ENCODE measurements at regions of chr2 and their contacts with region 1.

Region 1: DNA sequence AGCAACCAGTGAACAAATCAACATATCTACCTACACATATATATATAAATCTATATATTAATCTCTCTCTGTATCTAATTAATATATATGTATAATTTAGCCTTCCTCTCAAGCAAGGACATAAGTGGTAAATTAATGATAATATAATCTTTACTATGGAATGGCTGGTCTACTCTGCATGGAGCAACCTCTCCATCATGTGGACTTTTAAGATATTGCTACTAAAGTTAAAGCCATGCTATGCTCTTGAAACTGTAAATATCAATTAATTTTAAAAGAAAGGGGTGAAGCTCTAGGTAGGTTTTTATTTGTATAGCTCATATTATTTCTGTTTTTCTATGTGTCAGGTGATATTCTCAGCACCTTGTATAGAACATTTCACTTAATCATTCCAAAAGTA is 147.0 kb downstream of the PPP1R1C start:
- DNase-seq: peak; percentile 53
- ATAC-seq: peak; percentile 62; the same call in 1 of the 2 replicates
- H3K4me3 ChIP-seq: no peak overlapping the region
- H3K27ac ChIP-seq: no peak overlapping the region
- H3K4me1 ChIP-seq: peaks cover 10% of the 10 kb centered on the region
- H3K27me3 ChIP-seq: no peaks in the 10 kb centered on the region
- CTCF ChIP-seq: peak; percentile 63
- POLR2A ChIP-seq: no peak
- RAD21 ChIP-seq: peak; percentile 75

Region 2: DNA sequence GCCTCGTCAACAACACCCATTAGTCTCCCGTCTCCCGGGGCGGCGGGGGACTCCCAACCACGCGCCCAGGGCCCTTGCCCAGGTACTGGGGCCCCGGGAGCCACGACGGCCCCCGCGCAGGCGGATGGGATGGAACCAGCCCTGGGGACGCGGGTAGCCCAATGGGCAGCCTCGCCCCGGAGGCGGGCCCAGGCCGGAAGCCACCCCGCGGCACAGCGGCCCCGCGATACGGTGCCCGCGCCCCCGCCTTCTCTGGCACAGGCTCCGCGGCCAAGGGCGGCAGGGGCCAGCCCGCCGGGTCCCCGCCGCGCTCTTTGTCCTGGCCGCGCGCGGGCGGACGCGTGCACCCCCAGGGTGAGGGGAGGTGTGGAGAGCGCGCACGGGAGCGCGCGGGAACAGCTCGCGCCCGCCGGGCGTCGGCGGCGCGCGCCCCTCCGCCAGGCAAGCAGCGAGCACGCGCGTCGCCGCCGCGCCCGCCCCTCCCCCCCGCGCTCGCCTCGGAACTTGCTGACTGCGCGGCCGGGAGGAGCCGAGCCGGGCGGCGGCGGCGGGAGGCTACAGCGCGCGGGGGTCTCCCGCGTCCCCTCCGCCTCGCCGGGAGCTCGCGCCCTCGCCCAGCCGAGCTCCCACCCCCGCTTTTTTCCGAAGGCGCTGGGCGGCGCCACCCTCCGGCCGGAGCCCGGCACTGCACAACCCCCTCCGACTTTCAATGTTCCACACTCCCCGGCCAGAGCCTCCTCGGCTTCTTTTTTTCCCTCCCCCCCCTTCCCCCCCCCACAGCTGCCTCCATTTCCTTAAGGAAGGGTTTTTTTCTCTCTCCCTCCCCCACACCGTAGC is 1152.3 kb before region 1 on chr2 and contains the start of gene UBE2E3:
- CTCF ChIA-PET with region 1: no interaction called
- POLR2A ChIA-PET with region 1: no interaction called
- dilution Hi-C with region 1: no loop called
- in situ Hi-C with region 1: no loop called
- intact Hi-C with region 1: loop called (anchors 5 kb)
- DNase-seq: peak; percentile 72
- ATAC-seq: peak; percentile 82
- H3K4me3 ChIP-seq: peak within 1 kb of the TSS; percentile 96
- H3K27ac ChIP-seq: peak within 1 kb of the TSS; percentile 75
- H3K4me1 ChIP-seq: 0 out of 2 replicates have a peak, but pooled peaks cover 7% of the 10 kb centered on the region
- H3K27me3 ChIP-seq: no peaks in the 10 kb centered on the region
- CTCF ChIP-seq: peak; percentile 77
- POLR2A ChIP-seq: peak; percentile 44
- RAD21 ChIP-seq: peak; percentile 67
- total RNA-seq, gene UBE2E3: 92.8 and 106 TPM in 2 replicates

Region 3: DNA sequence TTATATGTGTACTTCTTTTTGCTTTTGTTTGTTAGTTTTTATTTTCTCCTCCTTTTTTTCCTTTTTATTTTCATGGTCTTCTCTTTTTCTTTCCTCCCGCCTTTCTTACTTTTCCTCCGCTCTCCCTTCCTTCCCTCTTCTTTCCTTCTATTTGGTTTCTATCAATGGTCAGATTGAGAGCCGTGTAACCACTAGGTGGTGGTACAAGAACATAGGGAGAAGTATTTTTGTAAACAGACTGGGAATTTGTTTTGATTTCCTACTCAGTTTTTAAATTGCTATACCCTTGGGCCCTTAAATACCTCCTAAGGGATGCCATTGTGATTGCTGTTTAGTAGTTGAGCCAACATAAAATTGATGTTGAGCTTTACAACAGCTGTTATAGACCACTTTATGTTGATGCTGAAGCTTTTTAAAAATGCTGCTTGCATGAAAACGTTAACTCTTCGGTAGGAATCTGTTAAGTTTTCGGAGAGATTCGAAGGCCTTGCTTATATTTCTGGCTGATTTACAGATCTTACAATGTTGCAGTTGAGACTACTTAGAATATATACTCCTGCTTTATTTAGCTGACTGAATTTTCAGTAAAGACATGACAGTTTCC is 1028.0 kb before region 1 on chr2:
- CTCF ChIA-PET with region 1: no interaction called
- POLR2A ChIA-PET with region 1: no interaction called
- dilution Hi-C with region 1: no loop called
- in situ Hi-C with region 1: no loop called
- intact Hi-C with region 1: loop called (anchors 5 kb)
- DNase-seq: peak; percentile 76
- ATAC-seq: peak; percentile 50
- H3K4me3 ChIP-seq: no peak overlapping the region
- H3K27ac ChIP-seq: no peak overlapping the region
- H3K4me1 ChIP-seq: peaks cover 5% of the 10 kb centered on the region
- H3K27me3 ChIP-seq: no peaks in the 10 kb centered on the region
- CTCF ChIP-seq: peak; percentile 90
- POLR2A ChIP-seq: no peak
- RAD21 ChIP-seq: peak; percentile 86

Region 4: DNA sequence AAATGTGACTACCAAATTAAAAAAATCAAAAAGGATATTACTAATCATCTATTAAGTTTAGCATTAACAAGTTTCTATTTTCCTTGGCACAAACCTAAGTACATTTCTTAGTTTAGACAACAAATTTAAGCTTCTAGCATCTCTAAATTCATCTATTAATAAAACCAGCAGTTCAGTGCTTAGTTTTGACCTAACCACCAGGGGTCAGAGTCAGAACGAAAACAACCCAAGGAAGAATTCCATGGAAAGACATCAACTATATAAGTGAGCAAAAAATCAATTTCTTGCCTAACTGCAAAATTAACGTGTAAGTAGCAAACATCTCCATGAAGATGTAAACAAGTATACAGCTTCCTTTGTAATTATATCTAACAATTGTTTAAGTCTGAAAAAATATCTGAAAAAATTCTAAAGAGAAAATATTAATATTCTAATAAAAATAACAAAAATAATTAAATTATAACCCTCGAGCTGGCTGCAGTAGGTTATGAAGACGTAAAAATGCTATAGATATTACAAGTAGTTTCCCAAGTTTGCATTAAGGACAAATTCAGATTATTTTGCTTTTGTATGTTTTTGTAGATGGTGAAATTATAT is 559.4 kb before region 1 on chr2:
- CTCF ChIA-PET with region 1: interaction called, 3 read pairs
- POLR2A ChIA-PET with region 1: no interaction called
- dilution Hi-C with region 1: no loop called
- in situ Hi-C with region 1: loop called (anchors 25 kb)
- intact Hi-C with region 1: loop called (anchors 1 kb)
- DNase-seq: peak; percentile 50
- ATAC-seq: peak; percentile 54; the same call in 1 of the 2 replicates
- H3K4me3 ChIP-seq: no peak overlapping the region
- H3K27ac ChIP-seq: no peak overlapping the region
- H3K4me1 ChIP-seq: no peaks in the 10 kb centered on the region
- H3K27me3 ChIP-seq: peaks cover 9% of the 10 kb centered on the region
- CTCF ChIP-seq: peak; percentile 55
- POLR2A ChIP-seq: no peak
- RAD21 ChIP-seq: peak; percentile 47

Region 5: DNA sequence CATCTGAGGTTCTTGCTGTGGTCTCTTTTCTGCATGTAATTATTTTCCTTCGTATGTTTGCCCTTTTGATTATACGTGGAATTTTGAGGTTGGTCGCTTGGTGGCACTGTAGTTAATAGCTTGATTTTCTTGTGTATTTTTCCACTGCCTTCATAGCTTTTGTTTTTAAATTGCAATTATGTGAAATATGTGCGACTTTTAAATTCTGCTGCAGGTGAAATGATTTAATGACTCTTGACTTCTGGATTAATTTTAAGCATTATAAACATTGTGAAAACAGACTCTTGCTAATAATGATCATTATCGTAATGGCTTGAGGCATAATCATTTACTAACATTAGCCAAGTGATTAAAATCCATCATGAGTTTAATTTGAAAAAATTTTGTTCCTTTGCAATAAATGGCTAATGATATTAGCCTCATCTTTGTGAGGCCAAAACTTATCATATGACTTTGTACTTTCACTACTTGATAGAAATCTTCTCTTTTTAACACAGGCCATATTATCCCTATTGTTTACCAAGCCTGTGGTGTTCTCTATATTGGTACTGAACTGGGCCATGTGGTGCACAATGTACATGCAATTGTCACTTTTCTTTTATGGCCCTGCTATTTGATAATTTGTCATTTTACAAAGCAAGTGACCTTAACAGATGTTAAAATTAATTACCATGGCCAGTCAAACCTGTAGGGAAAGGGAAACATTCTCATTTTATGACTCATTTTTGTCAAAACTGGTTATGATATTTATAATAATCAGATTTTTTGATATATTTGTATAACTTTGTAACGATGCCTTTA is 389.5 kb before region 1 on chr2:
- CTCF ChIA-PET with region 1: interaction called, 3 read pairs
- POLR2A ChIA-PET with region 1: no interaction called
- dilution Hi-C with region 1: no loop called
- in situ Hi-C with region 1: no loop called
- intact Hi-C with region 1: loop called (anchors 1 kb)
- DNase-seq: peak; percentile 73
- ATAC-seq: peak; percentile 77
- H3K4me3 ChIP-seq: no peak overlapping the region
- H3K27ac ChIP-seq: no peak overlapping the region
- H3K4me1 ChIP-seq: no peaks in the 10 kb centered on the region; the same call in 1 of the 2 replicates
- H3K27me3 ChIP-seq: no peaks in the 10 kb centered on the region
- CTCF ChIP-seq: peak; percentile 77
- POLR2A ChIP-seq: no peak
- RAD21 ChIP-seq: peak; percentile 80

Region 6: DNA sequence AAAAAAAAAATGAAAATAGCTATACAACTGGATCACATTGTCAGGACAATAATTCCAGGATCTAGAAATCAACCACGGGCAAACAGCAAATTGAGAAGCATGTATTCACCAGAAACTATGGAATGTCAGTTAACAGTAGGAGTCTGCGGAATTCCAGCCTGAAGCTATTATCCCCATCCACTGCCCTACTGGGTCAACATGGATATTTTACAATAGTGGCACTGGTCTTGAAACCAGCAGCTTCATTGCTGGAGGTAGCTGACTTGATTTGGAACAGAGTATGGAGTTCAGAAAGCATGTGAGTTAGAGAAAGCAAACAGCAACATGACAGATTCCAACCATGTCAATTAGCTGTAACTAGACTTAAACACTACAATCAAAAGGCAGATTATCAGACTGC is 349.9 kb after region 1 on chr2:
- CTCF ChIA-PET with region 1: no interaction called
- POLR2A ChIA-PET with region 1: no interaction called
- dilution Hi-C with region 1: no loop called
- in situ Hi-C with region 1: no loop called
- intact Hi-C with region 1: no loop called
- DNase-seq: no peak
- ATAC-seq: no peak
- H3K4me3 ChIP-seq: no peak overlapping the region
- H3K27ac ChIP-seq: no peak overlapping the region
- H3K4me1 ChIP-seq: no peaks in the 10 kb centered on the region
- H3K27me3 ChIP-seq: no peaks in the 10 kb centered on the region
- CTCF ChIP-seq: no peak
- POLR2A ChIP-seq: no peak
- RAD21 ChIP-seq: no peak

Region 7: GRCh38 chr2:183185534-183185933 is 1052.9 kb after region 1 on chr2:
- CTCF ChIA-PET with region 1: no interaction called
- POLR2A ChIA-PET with region 1: no interaction called
- dilution Hi-C with region 1: no loop called
- in situ Hi-C with region 1: no loop called
- intact Hi-C with region 1: no loop called
- DNase-seq: peak; percentile 8
- ATAC-seq: peak; percentile 60
- H3K4me3 ChIP-seq: no peak overlapping the region
- H3K27ac ChIP-seq: peak overlapping the region; percentile 85; the same call in 1 of the 2 replicates
- H3K4me1 ChIP-seq: peaks cover 11% of the 10 kb centered on the region
- H3K27me3 ChIP-seq: no peaks in the 10 kb centered on the region
- CTCF ChIP-seq: no peak
- POLR2A ChIP-seq: no peak
- RAD21 ChIP-seq: no peak